Activated B cell treated with CpG ODN at 0.5 μM for 24 hours (primary cell): ENCODE measurements at regions of chr16 and their contacts with region 1.

Region 1: DNA sequence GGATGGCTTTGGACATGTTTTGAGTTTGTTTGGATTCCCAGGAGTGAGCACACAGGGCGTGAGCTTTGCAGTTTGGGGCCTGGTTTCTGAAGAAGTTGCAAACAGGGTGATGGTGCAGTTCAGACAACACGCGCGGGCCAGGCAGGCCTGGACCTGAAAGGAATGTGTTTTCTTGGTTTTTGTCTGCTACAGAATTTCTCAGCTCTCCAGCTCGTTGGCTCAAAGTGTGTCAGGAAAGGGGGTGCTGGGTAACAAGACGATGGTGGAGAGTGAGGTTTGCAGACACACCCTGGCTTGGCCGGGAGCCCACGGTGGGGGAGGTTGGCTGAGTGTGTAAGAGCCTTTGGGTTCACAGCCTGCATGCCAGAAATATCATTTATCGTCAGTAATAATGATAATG is 82.3 kb downstream of the CMIP start:
- DNase-seq: no peak
- ATAC-seq: no peak
- H3K4me3 Mint-ChIP-seq: no peak overlapping the region
- H3K27ac Mint-ChIP-seq: no peak overlapping the region
- H3K4me1 Mint-ChIP-seq: peaks cover 28% of the 10 kb centered on the region
- H3K27me3 Mint-ChIP-seq: no peaks in the 10 kb centered on the region
- CTCF ChIP-seq: no peak

Region 2: GRCh38 chr16:81585785-81586184 is 58.9 kb after region 1 on chr16:
- CTCF ChIA-PET with region 1: no interaction called
- POLR2A ChIA-PET with region 1: no interaction called
- intact Hi-C with region 1: no loop called
- DNase-seq: no peak
- ATAC-seq: no peak
- H3K4me3 Mint-ChIP-seq: no peak overlapping the region
- H3K27ac Mint-ChIP-seq: no peak overlapping the region
- H3K4me1 Mint-ChIP-seq: peaks cover 3% of the 10 kb centered on the region
- H3K27me3 Mint-ChIP-seq: no peaks in the 10 kb centered on the region
- CTCF ChIP-seq: no peak

Region 3: GRCh38 chr16:81608518-81609209 is 81.7 kb after region 1 on chr16:
- CTCF ChIA-PET with region 1: no interaction called
- POLR2A ChIA-PET with region 1: no interaction called
- intact Hi-C with region 1: loop called (anchors 5 kb)
- DNase-seq: no peak
- ATAC-seq: peak; percentile 77
- H3K4me3 Mint-ChIP-seq: peak overlapping the region; percentile 7
- H3K27ac Mint-ChIP-seq: peak overlapping the region; percentile 71
- H3K4me1 Mint-ChIP-seq: peaks cover 34% of the 10 kb centered on the region
- H3K27me3 Mint-ChIP-seq: no peaks in the 10 kb centered on the region
- CTCF ChIP-seq: no peak

Region 4: DNA sequence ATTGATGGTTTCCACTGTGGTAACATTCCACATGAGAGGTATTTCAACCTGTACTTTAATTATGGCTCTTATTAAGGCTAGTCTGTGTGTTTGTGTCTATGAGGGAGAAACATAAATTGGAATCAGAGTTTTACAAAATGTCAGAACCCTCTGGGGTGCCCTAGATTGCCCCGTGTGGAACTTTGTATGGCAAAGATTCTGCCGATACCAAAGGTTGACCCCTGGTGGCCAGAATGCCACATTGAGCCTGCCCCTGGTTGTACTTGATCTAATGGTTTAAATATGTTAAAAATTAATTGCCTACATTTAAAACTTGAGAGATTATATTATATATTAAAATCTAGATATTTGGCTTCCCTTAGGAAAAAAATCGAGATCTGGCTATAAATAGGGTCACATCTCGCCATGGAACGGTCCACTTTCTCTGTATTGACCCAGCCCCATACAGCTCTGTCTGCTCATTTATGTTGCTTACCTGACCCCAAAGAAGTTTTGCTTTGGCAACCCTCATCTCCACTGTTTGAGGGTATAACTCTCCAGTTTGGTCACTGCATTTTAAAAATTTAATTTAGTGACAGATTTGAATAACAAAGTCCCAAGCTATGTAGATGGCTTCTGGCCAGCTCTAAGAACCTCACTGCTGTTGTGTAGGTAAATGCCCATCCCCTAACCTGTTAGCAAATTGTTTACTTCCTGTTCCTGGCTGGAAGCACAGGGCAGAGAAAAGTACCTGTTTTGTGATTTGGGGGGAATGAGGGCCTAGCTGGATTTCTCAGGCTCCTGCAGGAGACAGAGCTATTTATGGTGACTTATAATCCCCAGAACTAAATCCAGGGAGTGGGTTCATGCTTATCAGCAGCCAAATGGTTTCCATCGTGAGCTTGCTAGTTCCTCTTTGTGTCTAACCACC is 347.2 kb after region 1 on chr16:
- CTCF ChIA-PET with region 1: no interaction called
- POLR2A ChIA-PET with region 1: no interaction called
- intact Hi-C with region 1: no loop called
- DNase-seq: peak; percentile 45
- ATAC-seq: peak; percentile 91
- H3K4me3 Mint-ChIP-seq: no peak overlapping the region
- H3K27ac Mint-ChIP-seq: peak overlapping the region; percentile 66
- H3K4me1 Mint-ChIP-seq: peaks cover 41% of the 10 kb centered on the region
- H3K27me3 Mint-ChIP-seq: no peaks in the 10 kb centered on the region
- CTCF ChIP-seq: no peak